ENCODE measurements at regions of chr1 and their contacts with region 1.

Region 1: GRCh38 chr1:36420836-36421664 is 23.3 kb upstream of the LSM10 start:
- DNase-seq: peak; percentile 80 to 92 (median 89)
- ATAC-seq: peak; percentile 100
- H3K4me3 ChIP-seq: peak overlapping the region; percentile 17
- H3K4me3 Mint-ChIP-seq: peak overlapping the region; percentile 64 to 85 (median 77)
- H3K27ac ChIP-seq: peak overlapping the region; percentile 65
- H3K27ac Mint-ChIP-seq: peak overlapping the region; percentile 74 to 98 (median 93)
- H3K4me1 ChIP-seq: peaks cover 10 to 19% of the 10 kb centered on the region in 2 donors
- H3K4me1 Mint-ChIP-seq: peaks cover 11 to 37% (median 33%) of the 10 kb centered on the region in 7 donors
- H3K27me3 ChIP-seq: no peaks in the 10 kb centered on the region
- H3K27me3 Mint-ChIP-seq: no peaks in the 10 kb centered on the region

Region 2: DNA sequence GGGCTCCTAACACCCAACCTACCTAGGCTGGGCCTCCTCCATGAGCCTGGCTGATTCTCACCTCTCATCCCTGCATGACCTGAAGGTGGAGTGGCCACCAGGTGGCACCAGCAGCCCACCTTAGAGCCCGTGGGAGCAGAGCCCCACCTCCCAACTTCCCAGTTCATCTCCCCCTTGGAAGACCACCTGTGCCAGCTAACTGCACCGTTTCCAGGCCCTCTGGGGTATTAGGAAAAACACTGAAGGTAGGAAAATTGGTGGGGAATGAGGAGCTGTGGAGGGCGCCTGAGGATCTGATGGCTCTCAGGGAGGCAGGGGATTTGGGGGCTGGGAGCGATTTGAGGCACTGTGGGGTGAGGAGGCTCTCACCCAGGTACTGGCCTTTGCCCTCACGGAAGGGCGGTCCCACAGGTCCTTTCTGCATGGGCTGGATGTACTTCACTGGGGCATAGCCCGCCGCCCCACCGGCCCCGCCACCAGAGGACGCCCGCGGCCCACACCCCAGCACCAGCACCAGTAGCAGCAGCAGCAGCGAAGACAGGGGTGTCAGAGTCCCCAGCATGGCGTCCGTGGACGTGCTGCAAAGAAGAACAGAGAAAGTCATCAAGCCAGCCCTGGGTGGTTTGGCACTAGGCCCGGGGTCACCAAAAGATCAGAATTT is 321.2 kb before region 1 on chr1:
- CTCF ChIA-PET with region 1: no interaction called
- POLR2A ChIA-PET with region 1: no interaction called
- intact Hi-C with region 1: loop called (anchors 1 to 2 kb)
- DNase-seq: peak; percentile 50 to 79 (median 65)
- ATAC-seq: peak; percentile 92
- H3K4me3 ChIP-seq: no peak overlapping the region
- H3K4me3 Mint-ChIP-seq: peak overlapping the region in 5 of 10 donors; percentile 12 to 50 (median 35)
- H3K27ac ChIP-seq: no peak overlapping the region
- H3K27ac Mint-ChIP-seq: peak overlapping the region in 1 of 9 donors; percentile 14
- H3K4me1 ChIP-seq: no peaks in the 10 kb centered on the region
- H3K4me1 Mint-ChIP-seq: peaks cover 0 to 10% (median 2%) of the 10 kb centered on the region in 7 donors
- H3K27me3 ChIP-seq: no peaks in the 10 kb centered on the region
- H3K27me3 Mint-ChIP-seq: no peaks in the 10 kb centered on the region

Region 3: GRCh38 chr1:36175137-36176095 is 245.6 kb before region 1 on chr1:
- CTCF ChIA-PET with region 1: no interaction called
- POLR2A ChIA-PET with region 1: no interaction called
- intact Hi-C with region 1: no loop called
- DNase-seq: no peak
- ATAC-seq: peak; percentile 41
- H3K4me3 ChIP-seq: no peak overlapping the region
- H3K4me3 Mint-ChIP-seq: no peak overlapping the region
- H3K27ac ChIP-seq: peak overlapping the region; percentile 45
- H3K27ac Mint-ChIP-seq: peak overlapping the region in 6 of 9 donors; percentile 10 to 75 (median 48)
- H3K4me1 ChIP-seq: no peaks in the 10 kb centered on the region
- H3K4me1 Mint-ChIP-seq: peaks cover 2 to 19% (median 12%) of the 10 kb centered on the region in 7 donors
- H3K27me3 ChIP-seq: no peaks in the 10 kb centered on the region
- H3K27me3 Mint-ChIP-seq: no peaks in the 10 kb centered on the region

Region 4: DNA sequence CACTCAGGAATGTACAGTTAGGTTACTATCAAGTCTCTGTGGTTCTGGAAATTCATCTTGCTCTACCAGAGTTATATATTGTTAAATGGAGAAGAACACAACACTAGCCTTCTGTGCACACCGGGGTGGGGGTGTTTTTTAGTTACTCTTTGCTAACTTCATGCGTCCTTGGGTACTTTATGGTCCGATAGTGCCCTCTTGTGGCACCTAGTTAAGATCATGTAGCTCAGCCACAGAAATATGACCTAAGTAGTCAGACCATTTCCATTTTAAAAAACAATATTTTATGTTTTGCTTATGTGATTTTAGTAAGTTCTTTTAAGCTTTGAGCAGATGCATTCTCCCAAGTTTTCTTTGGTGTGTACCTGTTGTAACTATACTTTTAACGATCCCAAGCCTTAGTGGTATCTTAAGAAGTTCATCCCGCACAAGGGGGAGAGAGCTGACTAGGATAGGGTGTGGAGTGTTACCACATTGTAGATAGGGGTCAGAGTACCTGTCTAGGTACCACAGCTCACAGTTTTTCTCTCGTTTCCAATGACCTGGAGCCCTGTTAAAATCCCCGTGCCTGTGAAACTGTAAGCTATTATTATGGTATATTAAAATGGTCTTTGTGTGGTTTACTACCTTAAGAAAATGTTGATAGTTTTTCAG is 135.5 kb before region 1 on chr1:
- CTCF ChIA-PET with region 1: interaction called, 10 read pairs
- POLR2A ChIA-PET with region 1: no interaction called
- intact Hi-C with region 1: loop called in 1 of 2 experiments (anchors 1 kb)
- DNase-seq: peak in 7 of 9 donors; percentile 60 to 80 (median 73)
- ATAC-seq: peak; percentile 96
- H3K4me3 ChIP-seq: no peak overlapping the region
- H3K4me3 Mint-ChIP-seq: no peak overlapping the region
- H3K27ac ChIP-seq: no peak overlapping the region
- H3K27ac Mint-ChIP-seq: peak overlapping the region in 8 of 9 donors; percentile 3 to 87 (median 42)
- H3K4me1 ChIP-seq: no peaks in the 10 kb centered on the region
- H3K4me1 Mint-ChIP-seq: peaks cover 4 to 34% (median 17%) of the 10 kb centered on the region in 7 donors
- H3K27me3 ChIP-seq: no peaks in the 10 kb centered on the region
- H3K27me3 Mint-ChIP-seq: no peaks in the 10 kb centered on the region

Region 5: GRCh38 chr1:36306902-36307456 is 114.1 kb before region 1 on chr1:
- CTCF ChIA-PET with region 1: no interaction called
- POLR2A ChIA-PET with region 1: no interaction called
- intact Hi-C with region 1: loop called in 1 of 2 experiments (anchors 1 kb)
- DNase-seq: peak; percentile 90 to 96 (median 93)
- ATAC-seq: peak; percentile 99
- H3K4me3 ChIP-seq: peak overlapping the region; percentile 87
- H3K4me3 Mint-ChIP-seq: peak overlapping the region; percentile 87 to 98 (median 96)
- H3K27ac ChIP-seq: peak overlapping the region; percentile 81
- H3K27ac Mint-ChIP-seq: peak overlapping the region; percentile 70 to 97 (median 87)
- H3K4me1 ChIP-seq: peaks cover 0 to 6% of the 10 kb centered on the region in 2 donors
- H3K4me1 Mint-ChIP-seq: peaks cover 6 to 39% (median 13%) of the 10 kb centered on the region in 7 donors
- H3K27me3 ChIP-seq: no peaks in the 10 kb centered on the region
- H3K27me3 Mint-ChIP-seq: no peaks in the 10 kb centered on the region

Region 6: DNA sequence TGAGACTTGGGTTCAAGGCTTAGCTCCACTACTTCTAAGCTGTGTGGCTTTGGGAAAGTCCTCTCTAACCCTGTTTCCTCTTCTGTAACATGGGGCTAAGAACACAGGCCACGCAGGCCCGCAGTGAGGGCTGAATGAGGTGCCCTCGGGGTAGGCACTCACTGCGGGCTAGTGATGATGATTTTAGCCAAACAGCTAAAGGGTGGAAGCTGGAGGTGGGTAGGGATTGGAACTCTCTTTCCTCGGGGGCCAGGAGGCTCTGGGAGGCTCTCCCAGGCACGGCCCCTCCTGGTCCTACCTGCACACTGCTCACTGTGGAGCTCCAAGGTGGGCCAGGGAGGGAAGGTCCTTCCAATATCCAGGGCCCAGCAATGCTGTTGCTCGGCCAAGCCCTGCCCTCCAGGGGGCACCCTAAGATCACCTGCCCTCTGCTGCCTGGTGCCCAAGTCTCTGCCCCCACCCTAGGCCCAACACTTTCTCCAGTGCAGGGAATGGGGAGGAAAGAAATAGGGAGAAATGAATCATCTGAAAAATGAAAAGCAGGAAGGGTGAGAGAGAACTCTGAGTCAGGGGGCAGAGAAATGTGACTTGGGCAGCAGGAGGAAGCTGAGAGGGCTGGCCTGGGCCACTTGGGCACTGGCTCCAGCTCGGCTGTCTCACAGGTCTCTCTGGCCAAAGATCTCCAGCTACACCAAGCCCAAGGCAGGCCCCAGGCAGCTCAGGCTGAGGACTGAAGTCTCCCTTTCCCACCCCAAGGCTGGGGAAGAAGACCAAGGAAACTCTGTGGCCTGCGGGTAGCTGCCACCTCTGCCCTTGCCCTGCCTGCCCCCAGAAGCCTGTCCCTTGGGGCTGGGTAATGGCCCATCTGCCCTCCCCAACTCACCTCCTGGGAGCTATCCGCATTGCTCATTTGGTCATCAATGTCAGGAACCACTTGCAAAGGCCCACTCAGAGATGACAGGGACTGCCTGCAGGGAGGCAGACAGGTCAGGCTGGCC is 78.3 kb before region 1 on chr1:
- CTCF ChIA-PET with region 1: interaction called, 63 read pairs
- POLR2A ChIA-PET with region 1: interaction called, 23 read pairs
- intact Hi-C with region 1: loop called (anchors 1 kb)
- DNase-seq: peak; percentile 47 to 72 (median 58)
- ATAC-seq: peak; percentile 86
- H3K4me3 ChIP-seq: no peak overlapping the region
- H3K4me3 Mint-ChIP-seq: no peak overlapping the region
- H3K27ac ChIP-seq: no peak overlapping the region
- H3K27ac Mint-ChIP-seq: peak overlapping the region in 6 of 9 donors; percentile 32 to 86 (median 71)
- H3K4me1 ChIP-seq: peaks cover 0 to 8% of the 10 kb centered on the region in 2 donors
- H3K4me1 Mint-ChIP-seq: peaks cover 6 to 40% (median 28%) of the 10 kb centered on the region in 7 donors
- H3K27me3 ChIP-seq: no peaks in the 10 kb centered on the region
- H3K27me3 Mint-ChIP-seq: no peaks in the 10 kb centered on the region

Region 7: DNA sequence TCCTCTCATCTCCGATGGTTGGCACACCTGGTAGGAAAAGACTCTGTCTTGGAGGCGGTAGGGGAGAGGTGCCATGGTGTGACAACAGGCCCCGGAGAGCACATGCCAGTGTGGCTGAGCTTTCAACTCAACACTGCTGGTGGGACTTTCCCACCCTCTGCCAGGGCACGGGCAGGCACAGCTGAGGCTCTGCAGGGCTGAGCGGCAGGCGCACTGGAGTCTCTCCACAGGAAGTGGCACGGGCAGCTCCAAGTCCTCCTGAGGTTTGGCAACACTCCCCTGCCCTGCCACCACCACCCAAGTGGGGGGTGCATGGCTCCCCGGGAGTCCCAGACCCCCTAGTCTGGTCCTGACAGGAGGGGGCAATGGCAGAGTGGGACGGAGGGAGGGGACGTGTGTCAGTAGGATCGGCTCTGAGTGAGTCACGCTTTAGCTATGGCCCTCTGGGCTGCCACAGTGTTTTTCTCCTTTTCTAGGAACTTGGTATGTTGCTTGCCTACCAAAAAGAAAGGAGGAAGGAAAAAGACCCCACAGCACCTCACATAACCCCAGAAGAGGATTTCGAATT is 70.3 kb before region 1 on chr1:
- CTCF ChIA-PET with region 1: interaction called, 63 read pairs
- POLR2A ChIA-PET with region 1: no interaction called
- intact Hi-C with region 1: loop called in 1 of 2 experiments (anchors 2 kb)
- DNase-seq: peak in 8 of 9 donors; percentile 43 to 75 (median 52)
- ATAC-seq: peak; percentile 96
- H3K4me3 ChIP-seq: no peak overlapping the region
- H3K4me3 Mint-ChIP-seq: peak overlapping the region; percentile 17 to 74 (median 50)
- H3K27ac ChIP-seq: peak overlapping the region; percentile 50
- H3K27ac Mint-ChIP-seq: peak overlapping the region; percentile 75 to 94 (median 87)
- H3K4me1 ChIP-seq: peaks cover 4 to 22% of the 10 kb centered on the region in 2 donors
- H3K4me1 Mint-ChIP-seq: peaks cover 6 to 38% (median 33%) of the 10 kb centered on the region in 7 donors
- H3K27me3 ChIP-seq: no peaks in the 10 kb centered on the region
- H3K27me3 Mint-ChIP-seq: no peaks in the 10 kb centered on the region

Region 8: DNA sequence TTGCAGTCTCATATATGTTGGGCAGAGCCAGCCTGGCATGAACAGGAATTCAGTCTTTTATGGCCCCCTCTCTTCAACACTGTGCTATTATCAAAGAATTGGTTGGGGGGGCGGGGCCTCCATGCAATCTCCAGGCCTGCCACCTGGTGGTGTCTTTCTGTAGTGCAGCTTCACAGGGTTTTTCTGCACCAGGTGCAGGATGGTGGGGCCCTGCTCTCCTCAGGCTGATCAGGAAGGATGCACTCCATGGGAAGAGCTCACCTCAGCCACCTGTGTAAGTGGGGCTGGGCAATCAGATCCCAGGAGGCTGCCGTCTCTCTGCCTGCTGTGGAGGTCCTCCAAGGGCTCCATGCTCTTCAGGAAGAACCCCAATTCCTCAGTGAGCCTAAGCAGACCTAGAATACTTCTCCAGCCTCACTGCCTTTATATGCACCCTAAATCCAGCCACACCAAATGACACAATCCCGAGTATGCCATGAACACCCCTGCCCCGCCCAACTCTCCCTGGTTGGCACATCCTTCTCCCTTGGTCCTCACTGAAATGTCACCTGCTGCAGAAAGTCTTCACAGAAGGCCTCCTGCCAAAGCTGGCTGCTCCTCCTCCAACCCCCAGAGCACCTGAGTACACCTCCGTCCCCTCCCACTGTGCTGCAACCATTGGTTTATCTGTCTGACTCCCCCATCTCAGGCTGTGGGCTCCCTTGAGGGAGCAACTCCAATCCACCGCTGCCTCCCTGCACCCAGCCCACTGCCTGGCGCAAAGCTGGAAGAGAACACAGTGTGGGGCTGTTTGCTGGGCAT is 51.8 kb before region 1 on chr1:
- CTCF ChIA-PET with region 1: interaction called, 26 read pairs
- POLR2A ChIA-PET with region 1: interaction called, 5 read pairs
- intact Hi-C with region 1: loop called (anchors 1 to 2 kb)
- DNase-seq: peak; percentile 70 to 87 (median 80)
- ATAC-seq: peak; percentile 75
- H3K4me3 ChIP-seq: no peak overlapping the region
- H3K4me3 Mint-ChIP-seq: peak overlapping the region in 7 of 10 donors; percentile 2 to 57 (median 32)
- H3K27ac ChIP-seq: peak overlapping the region; percentile 37
- H3K27ac Mint-ChIP-seq: peak overlapping the region; percentile 56 to 97 (median 94)
- H3K4me1 ChIP-seq: peaks cover 27 to 59% of the 10 kb centered on the region in 2 donors
- H3K4me1 Mint-ChIP-seq: peaks cover 50 to 79% (median 69%) of the 10 kb centered on the region in 7 donors
- H3K27me3 ChIP-seq: no peaks in the 10 kb centered on the region
- H3K27me3 Mint-ChIP-seq: no peaks in the 10 kb centered on the region

Region 9: DNA sequence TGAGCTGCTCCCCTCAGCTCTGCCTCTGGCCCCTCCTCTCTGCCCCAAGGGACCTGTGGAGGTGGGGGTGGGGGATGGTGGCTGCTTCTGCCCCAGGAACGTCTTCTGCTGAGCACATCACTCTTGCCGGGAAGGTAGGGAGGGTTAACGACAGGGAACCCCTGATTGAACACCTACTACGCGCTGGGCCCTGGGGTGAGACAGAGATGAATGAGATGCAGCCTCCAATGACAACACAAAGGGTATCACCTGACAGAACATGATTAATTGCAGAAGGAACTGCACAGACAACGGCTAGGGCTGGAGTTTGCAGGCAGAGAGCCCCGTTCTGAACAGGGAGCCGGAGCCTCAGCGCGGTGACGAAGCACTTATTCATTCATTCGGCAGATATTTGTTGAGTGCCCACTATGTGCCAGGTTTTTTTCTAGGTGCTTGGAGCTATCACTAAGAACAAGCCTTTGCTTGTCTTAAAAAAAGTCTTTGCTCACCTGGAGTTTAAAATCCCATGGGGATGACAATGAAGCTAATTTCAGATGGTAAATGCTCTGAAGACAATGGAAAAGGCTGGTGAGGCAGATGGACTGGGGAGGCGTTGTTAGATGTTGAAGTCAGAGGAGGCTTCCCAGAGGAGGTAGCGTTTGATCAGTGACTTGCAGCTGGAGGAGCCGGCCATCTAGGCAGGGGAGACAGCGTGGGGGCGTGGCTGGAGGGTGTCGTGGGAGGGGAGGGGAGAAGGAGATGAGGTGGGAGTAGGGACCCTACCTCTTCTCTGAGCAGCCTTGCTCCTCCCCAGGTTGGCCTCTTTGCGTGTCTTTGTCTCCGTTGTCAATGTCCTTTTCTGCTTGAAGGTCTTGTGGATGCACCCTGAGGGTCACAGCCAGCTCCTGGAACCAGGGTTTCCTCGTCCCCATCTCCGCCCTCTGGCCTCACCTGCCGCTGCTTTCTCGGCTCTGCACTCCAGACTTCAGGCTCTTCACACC is 164.8 kb after region 1 on chr1:
- CTCF ChIA-PET with region 1: no interaction called
- POLR2A ChIA-PET with region 1: no interaction called
- intact Hi-C with region 1: no loop called
- DNase-seq: no peak
- ATAC-seq: no peak
- H3K4me3 ChIP-seq: no peak overlapping the region
- H3K4me3 Mint-ChIP-seq: no peak overlapping the region
- H3K27ac ChIP-seq: no peak overlapping the region
- H3K27ac Mint-ChIP-seq: no peak overlapping the region
- H3K4me1 ChIP-seq: no peaks in the 10 kb centered on the region
- H3K4me1 Mint-ChIP-seq: peaks cover 0 to 5% (median 0%) of the 10 kb centered on the region in 7 donors
- H3K27me3 ChIP-seq: no peaks in the 10 kb centered on the region
- H3K27me3 Mint-ChIP-seq: peaks cover 20 to 49% (median 45%) of the 10 kb centered on the region in 5 donors

Region 10: GRCh38 chr1:36924282-36924811 is 503.3 kb after region 1 on chr1:
- CTCF ChIA-PET with region 1: no interaction called
- POLR2A ChIA-PET with region 1: no interaction called
- intact Hi-C with region 1: no loop called
- DNase-seq: peak in 4 of 9 donors; percentile 6 to 61 (median 12)
- ATAC-seq: no peak
- H3K4me3 ChIP-seq: no peak overlapping the region
- H3K4me3 Mint-ChIP-seq: no peak overlapping the region
- H3K27ac ChIP-seq: no peak overlapping the region
- H3K27ac Mint-ChIP-seq: no peak overlapping the region
- H3K4me1 ChIP-seq: no peaks in the 10 kb centered on the region
- H3K4me1 Mint-ChIP-seq: no peaks in the 10 kb centered on the region
- H3K27me3 ChIP-seq: no peaks in the 10 kb centered on the region
- H3K27me3 Mint-ChIP-seq: peaks cover 0 to 33% (median 7%) of the 10 kb centered on the region in 5 donors

Region 11: GRCh38 chr1:37978541-37978940 is 1557.5 kb after region 1 on chr1:
- CTCF ChIA-PET with region 1: no interaction called
- POLR2A ChIA-PET with region 1: no interaction called
- intact Hi-C with region 1: no loop called
- DNase-seq: no peak
- ATAC-seq: no peak
- H3K4me3 ChIP-seq: no peak overlapping the region
- H3K4me3 Mint-ChIP-seq: no peak overlapping the region
- H3K27ac ChIP-seq: no peak overlapping the region
- H3K27ac Mint-ChIP-seq: no peak overlapping the region
- H3K4me1 ChIP-seq: no peaks in the 10 kb centered on the region
- H3K4me1 Mint-ChIP-seq: peaks cover 0 to 10% (median 2%) of the 10 kb centered on the region in 7 donors
- H3K27me3 ChIP-seq: no peaks in the 10 kb centered on the region
- H3K27me3 Mint-ChIP-seq: no peaks in the 10 kb centered on the region

Measured in naive thymus-derived CD4-positive, alpha-beta T cell (primary cell).